CD4-positive, alpha-beta T cell (primary cell): ENCODE measurements at regions of chr7 and their contacts with region 1.

Region 1: GRCh38 chr7:99392677-99393354 is 15.6 kb downstream of the PDAP1 start:
- DNase-seq: peak; percentile 67 to 93 (median 81)
- ATAC-seq: peak; percentile 95
- H3K4me3 ChIP-seq: peak overlapping the region; percentile 56
- H3K4me3 Mint-ChIP-seq: peak overlapping the region; percentile 76
- H3K27ac ChIP-seq: peak overlapping the region; percentile 63 to 72
- H3K27ac Mint-ChIP-seq: peak overlapping the region; percentile 94
- H3K4me1 ChIP-seq: peaks cover 28% of the 10 kb centered on the region
- H3K4me1 Mint-ChIP-seq: peaks cover 18% of the 10 kb centered on the region
- H3K27me3 ChIP-seq: no peaks in the 10 kb centered on the region
- H3K27me3 Mint-ChIP-seq: no peaks in the 10 kb centered on the region
- CTCF ChIP-seq: no peak

Region 2: GRCh38 chr7:99374103-99375064 is 18.4 kb before region 1 on chr7 and contains the start of gene ARPC1B:
- CTCF ChIA-PET with region 1: no interaction called
- POLR2A ChIA-PET with region 1: interaction called, 37 read pairs
- intact Hi-C with region 1: loop called (anchors 2 kb)
- DNase-seq: peak; percentile 63 to 95 (median 82)
- ATAC-seq: peak; percentile 51
- H3K4me3 ChIP-seq: peak within 1 kb of the TSS; percentile 74
- H3K4me3 Mint-ChIP-seq: peak within 1 kb of the TSS; percentile 93
- H3K27ac ChIP-seq: peak within 1 kb of the TSS; percentile 89 to 94
- H3K27ac Mint-ChIP-seq: peak within 1 kb of the TSS; percentile 95
- H3K4me1 ChIP-seq: peaks cover 47% of the 10 kb centered on the region
- H3K4me1 Mint-ChIP-seq: peaks cover 27% of the 10 kb centered on the region
- H3K27me3 ChIP-seq: no peaks in the 10 kb centered on the region
- H3K27me3 Mint-ChIP-seq: no peaks in the 10 kb centered on the region
- CTCF ChIP-seq: no peak
- total RNA-seq, gene ARPC1B: 58.8 to 66.6 TPM

Region 3: DNA sequence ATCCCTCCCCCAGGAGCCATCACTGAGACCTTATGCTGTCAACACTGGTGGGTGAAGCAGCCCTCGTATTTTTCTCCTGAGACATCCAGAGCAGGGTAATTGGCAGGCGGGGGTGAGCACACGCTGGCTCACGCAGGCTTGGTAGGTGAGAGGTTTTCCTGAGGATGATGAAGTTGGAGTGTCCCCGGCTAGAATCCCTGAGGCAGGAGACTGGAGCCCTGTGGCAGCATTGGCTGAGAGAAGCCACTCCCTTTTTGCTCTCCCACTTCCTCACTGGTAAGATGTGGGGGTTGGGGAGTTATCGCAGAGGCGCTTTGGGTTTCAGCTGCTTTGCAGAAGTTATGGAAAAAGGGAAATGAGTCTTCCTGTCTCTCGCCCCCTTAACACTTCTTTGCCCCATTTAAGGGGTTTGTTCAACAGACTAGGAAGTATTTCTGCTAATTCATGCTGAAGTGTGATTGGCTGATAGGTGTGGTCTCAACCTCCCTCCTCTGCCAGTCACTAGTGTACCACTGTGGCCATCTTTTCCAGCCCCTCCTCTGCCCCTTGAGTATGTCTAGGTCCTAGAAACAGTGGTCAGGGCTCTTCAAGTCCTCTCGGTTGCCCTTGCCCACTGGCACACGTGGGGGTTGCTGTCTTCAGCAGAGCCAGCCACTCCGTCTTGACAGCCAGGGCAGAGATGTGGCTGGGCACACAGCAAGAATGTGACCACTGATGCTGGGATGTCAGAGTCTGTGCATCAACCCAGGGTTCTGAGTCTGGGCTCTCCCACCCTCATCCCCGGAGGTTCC is 12.6 kb before region 1 on chr7:
- CTCF ChIA-PET with region 1: no interaction called
- POLR2A ChIA-PET with region 1: interaction called, 37 read pairs
- intact Hi-C with region 1: loop called (anchors 2 kb)
- DNase-seq: peak in 4 of 14 experiments; percentile 19 to 75 (median 72)
- ATAC-seq: peak; percentile 4
- H3K4me3 ChIP-seq: peak overlapping the region; percentile 55
- H3K4me3 Mint-ChIP-seq: peak overlapping the region; percentile 80
- H3K27ac ChIP-seq: peak overlapping the region; percentile 99
- H3K27ac Mint-ChIP-seq: peak overlapping the region; percentile 95
- H3K4me1 ChIP-seq: peaks cover 94% of the 10 kb centered on the region
- H3K4me1 Mint-ChIP-seq: peaks cover 61% of the 10 kb centered on the region
- H3K27me3 ChIP-seq: no peaks in the 10 kb centered on the region
- H3K27me3 Mint-ChIP-seq: no peaks in the 10 kb centered on the region
- CTCF ChIP-seq: no peak